ENCODE measurements at regions of chr20 and their contacts with region 1.

Region 1: DNA sequence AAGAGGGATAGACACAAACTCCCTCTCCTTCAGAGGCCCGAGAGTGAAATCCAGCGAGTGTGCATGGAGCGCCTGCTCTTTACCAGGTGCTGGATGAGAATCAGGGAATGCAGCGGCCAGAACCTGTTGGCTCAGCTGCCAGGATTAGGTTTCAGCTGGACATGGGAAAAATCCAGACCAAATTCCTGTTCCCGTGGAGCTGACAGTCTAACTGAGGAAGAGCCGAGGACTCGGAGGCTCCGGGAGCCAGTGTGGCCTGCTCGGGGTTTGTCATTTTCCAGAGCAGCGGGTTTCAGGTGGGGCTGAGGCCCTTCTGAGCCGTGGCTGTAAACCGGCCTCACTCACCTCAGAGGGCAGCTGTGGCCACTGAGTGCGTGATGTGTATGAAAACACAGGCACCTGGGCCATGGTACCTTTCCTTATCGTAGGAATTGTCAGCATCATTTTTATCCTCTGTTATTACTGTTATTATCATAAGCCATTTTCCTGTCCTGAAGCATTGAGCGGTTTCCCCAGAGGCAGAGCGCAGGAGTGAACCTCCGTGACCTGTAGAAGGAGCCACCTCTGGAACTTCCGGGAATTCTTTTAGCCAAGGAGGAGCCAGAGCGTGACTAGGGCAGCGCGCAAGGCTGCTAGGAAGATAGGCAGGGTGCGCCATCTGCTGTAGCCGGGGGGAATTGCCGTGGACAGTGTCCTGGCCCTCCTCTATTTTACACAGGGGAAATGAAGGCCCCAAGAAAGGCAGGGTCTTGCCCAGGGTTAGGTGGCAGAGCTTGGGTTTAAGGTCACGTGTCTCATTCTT is 27.3 kb downstream of the PKIG start:
- DNase-seq: no peak
- H3K4me3 ChIP-seq: peak overlapping the region in 1 of 2 donors; percentile 17
- H3K27ac ChIP-seq: peak overlapping the region; percentile 85
- H3K4me1 ChIP-seq: peaks cover 37% of the 10 kb centered on the region
- H3K27me3 ChIP-seq: no peaks in the 10 kb centered on the region
- CTCF ChIP-seq: peak; percentile 97 to 99 (median 98)
- POLR2A ChIP-seq: no peak

Region 2: GRCh38 chr20:44388466-44389023 is 221.2 kb before region 1 on chr20:
- intact Hi-C with region 1: loop called (anchors 10 kb)
- DNase-seq: no peak
- H3K4me3 ChIP-seq: no peak overlapping the region
- H3K27ac ChIP-seq: no peak overlapping the region
- H3K4me1 ChIP-seq: peaks cover 12% of the 10 kb centered on the region
- H3K27me3 ChIP-seq: no peaks in the 10 kb centered on the region
- CTCF ChIP-seq: peak in 2 of 3 experiments; percentile 51 to 62
- POLR2A ChIP-seq: no peak

Region 3: GRCh38 chr20:44475694-44476560 is 133.8 kb before region 1 on chr20 and contains the start of gene TTPAL:
- intact Hi-C with region 1: loop called (anchors 10 kb)
- DNase-seq: no peak
- H3K4me3 ChIP-seq: peak within 1 kb of the TSS; percentile 69 to 91
- H3K27ac ChIP-seq: peak within 1 kb of the TSS; percentile 96
- H3K4me1 ChIP-seq: peaks cover 20% of the 10 kb centered on the region
- H3K27me3 ChIP-seq: no peaks in the 10 kb centered on the region
- CTCF ChIP-seq: peak in 2 of 3 experiments; percentile 46 to 56
- POLR2A ChIP-seq: peak; percentile 98 to 100
- total RNA-seq, gene TTPAL: 16.0 TPM